Activated B cell treated with CpG ODN at 0.5 μM for 24 hours (primary cell): ENCODE measurements at regions of chr2 and their contacts with region 1.

Region 1: GRCh38 chr2:241959751-241960269 is 90.3 kb downstream of the RTP5 start:
- DNase-seq: no peak
- ATAC-seq: no peak
- H3K4me3 Mint-ChIP-seq: no peak overlapping the region
- H3K27ac Mint-ChIP-seq: peak overlapping the region; percentile 77
- H3K4me1 Mint-ChIP-seq: peaks cover 49% of the 10 kb centered on the region
- H3K27me3 Mint-ChIP-seq: no peaks in the 10 kb centered on the region
- CTCF ChIP-seq: no peak

Region 2: GRCh38 chr2:241609859-241610793 is 349.7 kb before region 1 on chr2:
- CTCF ChIA-PET with region 1: no interaction called
- POLR2A ChIA-PET with region 1: no interaction called
- intact Hi-C with region 1: no loop called
- DNase-seq: peak; percentile 92
- ATAC-seq: peak; percentile 99
- H3K4me3 Mint-ChIP-seq: peak overlapping the region; percentile 66
- H3K27ac Mint-ChIP-seq: peak overlapping the region; percentile 53
- H3K4me1 Mint-ChIP-seq: peaks cover 15% of the 10 kb centered on the region
- H3K27me3 Mint-ChIP-seq: no peaks in the 10 kb centered on the region
- CTCF ChIP-seq: no peak

Region 3: DNA sequence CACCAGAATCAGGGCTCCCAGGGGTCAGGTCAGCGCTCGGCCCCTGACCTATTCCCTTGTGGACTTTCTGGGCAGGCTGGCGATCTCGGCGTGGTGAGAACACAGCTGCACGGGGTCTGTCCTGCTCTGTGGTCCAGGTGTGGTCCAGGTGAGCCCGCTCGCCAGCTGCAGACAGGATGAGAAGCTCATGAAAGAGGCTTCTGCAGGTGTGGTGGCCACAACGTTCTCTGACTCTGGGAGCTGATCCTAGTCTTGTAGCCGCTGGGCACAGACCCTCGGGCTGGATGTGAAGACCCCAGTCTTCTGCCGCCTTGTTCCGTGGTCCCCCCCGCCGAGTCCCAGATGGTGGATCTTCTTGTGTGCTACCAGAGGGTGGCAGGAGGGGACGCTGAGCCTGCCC is 39.4 kb after region 1 on chr2:
- CTCF ChIA-PET with region 1: no interaction called
- POLR2A ChIA-PET with region 1: interaction called, 3 read pairs
- intact Hi-C with region 1: loop called (anchors 5 kb)
- DNase-seq: no peak
- ATAC-seq: no peak
- H3K4me3 Mint-ChIP-seq: no peak overlapping the region
- H3K27ac Mint-ChIP-seq: no peak overlapping the region
- H3K4me1 Mint-ChIP-seq: no peaks in the 10 kb centered on the region
- H3K27me3 Mint-ChIP-seq: no peaks in the 10 kb centered on the region
- CTCF ChIP-seq: no peak